ENCODE measurements at regions of chr3 and their contacts with region 1.

Region 1: DNA sequence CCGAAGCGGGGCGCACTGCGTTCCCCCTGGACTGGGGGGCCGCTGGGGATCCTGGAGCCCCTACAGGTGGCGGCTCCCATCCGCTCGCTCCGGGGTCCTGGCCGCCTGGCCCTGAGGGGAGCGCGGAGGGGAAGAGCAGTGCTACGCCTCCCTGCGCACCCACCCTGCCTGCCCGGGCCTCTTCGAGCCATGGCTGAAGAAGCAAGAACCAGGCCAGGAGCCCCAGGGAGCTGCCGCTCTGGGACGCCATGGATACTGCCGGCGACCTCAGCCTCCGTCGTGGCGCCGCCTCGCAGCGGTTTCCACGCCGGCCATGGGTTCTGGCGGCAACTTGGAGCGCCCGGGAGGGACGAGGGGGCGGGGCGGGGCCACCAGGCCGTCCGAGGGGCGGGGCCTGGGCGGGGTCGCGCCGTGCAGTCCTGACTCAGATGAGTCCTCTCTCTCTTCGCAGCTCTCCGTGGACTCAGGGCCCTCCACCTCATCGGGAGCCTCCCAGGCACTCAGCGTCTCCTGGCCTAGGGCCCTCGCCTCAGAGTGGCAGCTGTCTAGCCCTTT is 50.9 kb downstream of the MYL3 start:
- DNase-seq: peak; percentile 57
- H3K4me3 ChIP-seq: peak overlapping the region in 1 of 3 experiments; percentile 13
- H3K27ac ChIP-seq: no peak overlapping the region
- H3K4me1 ChIP-seq: peaks cover 4% of the 10 kb centered on the region
- H3K27me3 ChIP-seq: peaks cover 16 to 19% of the 10 kb centered on the region in 2 experiments
- CTCF ChIP-seq: no peak
- POLR2A ChIP-seq: no peak

Region 2: DNA sequence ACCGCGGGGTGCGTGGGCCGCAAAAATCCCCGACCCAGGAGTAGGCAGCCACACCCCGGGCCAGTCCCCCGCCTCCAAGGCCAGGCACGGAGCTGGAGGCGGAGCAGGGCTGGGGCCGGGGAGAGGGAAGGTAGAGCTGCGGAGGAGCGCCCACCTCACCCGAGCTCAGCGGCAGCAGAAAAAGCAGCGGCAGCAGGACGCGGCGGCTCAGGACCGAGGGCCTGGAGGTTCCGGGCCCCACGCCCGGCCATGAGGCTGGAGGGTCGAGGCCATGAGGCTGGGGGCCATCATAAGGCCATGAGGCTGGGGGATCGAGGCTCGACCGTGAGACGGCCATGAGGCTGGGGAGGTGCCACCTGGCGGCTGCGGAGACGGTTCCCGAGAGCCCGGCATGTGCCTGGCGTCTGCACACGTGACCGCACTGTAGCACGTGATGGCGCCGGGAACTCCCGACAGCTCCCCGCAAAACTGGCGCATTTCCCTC is 61.7 kb before region 1 on chr3:
- CTCF ChIA-PET with region 1: interaction called, 17 read pairs
- POLR2A ChIA-PET with region 1: interaction called, 3 read pairs
- dilution Hi-C with region 1: no loop called
- intact Hi-C with region 1: no loop called
- DNase-seq: no peak
- H3K4me3 ChIP-seq: no peak overlapping the region
- H3K27ac ChIP-seq: no peak overlapping the region
- H3K4me1 ChIP-seq: no peaks in the 10 kb centered on the region
- H3K27me3 ChIP-seq: peaks cover 4 to 8% of the 10 kb centered on the region in 2 experiments
- CTCF ChIP-seq: no peak
- POLR2A ChIP-seq: no peak

Region 3: DNA sequence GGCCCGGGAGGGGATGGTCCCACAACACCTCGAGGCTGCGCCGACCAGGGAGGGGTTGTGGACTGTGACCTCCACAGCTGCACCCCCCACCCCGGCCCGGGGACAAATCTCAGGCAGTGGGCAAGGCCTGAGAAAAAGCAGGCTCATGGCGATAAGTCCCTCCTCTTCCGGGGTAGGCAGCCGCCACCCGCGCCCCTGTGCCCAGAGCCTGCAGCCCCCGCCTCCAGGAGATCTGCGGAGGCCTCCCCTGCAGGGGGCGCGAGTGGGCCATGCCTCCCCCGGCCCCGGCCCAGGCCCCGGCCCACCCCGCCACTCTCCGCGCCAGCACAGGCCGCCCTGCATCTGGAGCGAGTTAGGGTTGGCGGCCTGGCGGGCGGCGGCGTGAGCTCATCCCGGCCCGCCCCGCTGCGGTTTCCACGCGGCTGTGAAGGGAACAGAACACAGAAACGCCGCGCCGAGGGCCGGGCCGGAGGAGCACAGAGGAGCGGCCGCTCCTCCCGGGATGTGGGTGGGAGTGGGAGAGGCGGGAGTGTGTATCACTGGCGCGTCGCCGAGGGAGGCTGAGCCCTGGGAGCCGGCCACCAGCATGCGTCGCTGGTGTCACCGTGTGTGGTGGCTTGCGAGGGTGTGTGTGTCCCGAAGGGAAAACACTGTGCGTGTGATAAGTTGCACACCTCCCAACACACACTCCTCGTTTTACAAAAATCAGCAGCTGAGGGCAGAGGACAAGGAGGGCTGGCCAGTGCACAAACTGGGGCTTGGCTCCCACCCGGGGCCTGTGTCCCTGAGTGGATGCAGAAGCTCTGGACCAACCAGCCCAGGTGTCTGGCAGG is 33.7 kb after region 1 on chr3:
- CTCF ChIA-PET with region 1: interaction called, 5 read pairs
- POLR2A ChIA-PET with region 1: no interaction called
- dilution Hi-C with region 1: no loop called
- intact Hi-C with region 1: loop called (anchors 2 kb)
- DNase-seq: peak; percentile 56
- H3K4me3 ChIP-seq: peak overlapping the region in 2 of 3 experiments; percentile 19 to 41
- H3K27ac ChIP-seq: peak overlapping the region; percentile 3
- H3K4me1 ChIP-seq: peaks cover 14% of the 10 kb centered on the region
- H3K27me3 ChIP-seq: peaks cover 2 to 8% of the 10 kb centered on the region in 2 experiments
- CTCF ChIP-seq: peak; percentile 33 to 56
- POLR2A ChIP-seq: no peak